Gastrocnemius medialis (tissue), 4 donors: ENCODE measurements at regions of chr1 and their contacts with region 1.

Region 1: GRCh38 chr1:235415008-235415904 is 48.0 kb downstream of the TBCE start:
- DNase-seq: peak; percentile 20 to 59
- ATAC-seq: peak; percentile 42 to 62
- H3K4me3 ChIP-seq: no peak overlapping the region
- H3K27ac ChIP-seq: peak overlapping the region in 1 of 4 donors; percentile 23
- H3K4me1 ChIP-seq: peaks cover 7 to 13% of the 10 kb centered on the region in 2 donors
- H3K27me3 ChIP-seq: no peaks in the 10 kb centered on the region
- CTCF ChIP-seq: peak; percentile 62 to 76 (median 72)
- POLR2A ChIP-seq: no peak

Region 2: DNA sequence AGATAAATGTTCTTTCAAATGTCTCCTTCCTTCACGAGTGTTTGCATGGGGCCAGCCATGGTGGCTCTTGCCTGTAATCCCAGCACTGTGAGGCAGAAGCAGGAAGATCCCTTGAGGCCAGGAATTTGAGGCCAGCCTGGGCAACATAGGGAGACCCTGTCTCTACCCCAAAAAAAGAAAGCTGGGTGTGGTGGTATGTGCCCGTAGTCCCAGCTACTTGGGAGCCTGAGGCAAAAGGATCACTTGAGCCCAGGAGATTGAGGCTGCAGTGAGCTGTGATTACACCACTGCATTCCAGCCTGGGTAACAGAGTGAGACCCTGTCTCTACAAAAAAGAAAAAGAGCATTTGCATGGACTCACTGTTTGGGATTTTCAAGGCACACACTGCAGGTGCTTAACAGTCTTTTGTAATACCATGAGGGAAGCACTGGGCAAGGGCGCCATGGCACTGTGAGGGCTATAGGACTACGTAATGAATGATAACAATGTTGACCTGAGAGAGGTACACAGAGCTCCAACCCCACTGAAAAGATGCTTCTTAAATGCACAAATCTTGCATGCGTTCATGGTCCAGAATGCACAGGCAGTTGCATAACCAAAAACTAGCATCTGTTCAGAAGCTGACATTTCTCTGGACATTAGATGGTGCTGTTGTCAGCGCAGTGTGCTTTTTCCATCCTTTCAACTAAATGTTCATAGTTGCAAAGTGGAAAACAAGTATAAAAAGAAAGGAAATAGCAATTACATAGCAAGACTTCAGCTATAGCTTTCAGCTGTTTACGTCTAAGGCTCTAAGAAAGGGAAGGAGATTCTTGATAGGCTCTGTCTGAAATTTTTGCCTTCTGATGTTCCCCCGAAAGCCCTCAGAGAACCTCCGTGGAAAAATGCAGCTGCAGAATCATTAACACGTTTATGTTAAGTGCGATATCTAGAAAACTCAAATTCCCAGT is 928.5 kb before region 1 on chr1:
- in situ Hi-C with region 1: no loop called
- intact Hi-C with region 1: loop called (anchors 10 kb)
- DNase-seq: peak in 1 of 2 donors; percentile 45
- ATAC-seq: peak; percentile 81 to 91
- H3K4me3 ChIP-seq: no peak overlapping the region
- H3K27ac ChIP-seq: peak overlapping the region in 1 of 4 donors; percentile 6
- H3K4me1 ChIP-seq: peaks cover 3% of the 10 kb centered on the region in 2 donors
- H3K27me3 ChIP-seq: no peaks in the 10 kb centered on the region
- CTCF ChIP-seq: peak in 4 of 5 experiments; percentile 53 to 79 (median 66)
- POLR2A ChIP-seq: no peak

Region 3: DNA sequence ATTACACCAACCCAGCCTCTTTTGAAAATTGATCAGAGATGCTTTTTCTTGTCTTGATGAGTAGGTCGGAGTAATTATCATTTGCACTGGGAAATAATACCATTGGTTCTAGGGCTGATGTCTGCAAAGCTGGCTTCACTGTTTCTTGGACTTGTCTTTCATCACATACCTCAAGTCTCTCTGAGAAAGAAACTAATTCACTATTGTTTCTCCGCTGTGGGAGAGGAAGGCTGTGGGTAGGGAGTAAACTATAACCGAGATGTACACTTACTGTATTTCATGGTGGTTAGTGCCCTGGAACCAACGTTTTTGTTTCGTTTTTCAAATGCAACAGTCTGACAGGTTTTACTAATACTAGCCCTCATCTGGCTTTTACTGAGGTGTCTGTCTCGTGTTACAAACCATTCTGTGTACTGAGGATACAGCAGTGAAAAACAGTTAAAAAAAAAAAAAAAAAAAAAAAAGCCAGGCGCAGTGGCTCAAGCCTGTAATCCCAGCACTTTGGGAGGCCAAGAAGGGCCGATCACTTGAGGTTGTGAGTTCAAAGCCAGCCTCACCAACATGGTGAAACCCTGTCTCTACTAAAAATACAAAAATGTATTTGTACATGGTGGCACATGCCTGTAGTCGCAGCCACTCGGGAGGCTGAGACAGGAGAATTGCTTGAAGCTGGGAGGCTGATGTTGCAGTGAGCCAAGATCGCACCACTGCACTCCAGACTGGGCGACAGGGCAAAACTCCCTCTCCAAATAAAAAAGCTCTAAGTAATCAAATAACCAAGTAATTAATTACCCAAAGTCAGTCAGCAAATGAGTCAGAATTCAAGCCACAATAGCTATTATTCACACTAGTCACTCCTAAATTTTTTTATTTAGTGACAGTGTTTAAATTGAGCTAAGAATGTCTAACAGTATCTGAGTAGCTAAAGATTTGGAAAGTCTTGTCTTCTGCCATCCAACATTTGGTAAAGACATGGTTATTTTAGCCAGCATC is 309.9 kb before region 1 on chr1:
- in situ Hi-C with region 1: loop called in 2 of 4 experiments (anchors 10 to 25 kb)
- intact Hi-C with region 1: loop called (anchors 5 kb)
- DNase-seq: no peak
- ATAC-seq: no peak
- H3K4me3 ChIP-seq: no peak overlapping the region
- H3K27ac ChIP-seq: no peak overlapping the region
- H3K4me1 ChIP-seq: peaks cover 9 to 14% of the 10 kb centered on the region in 2 donors
- H3K27me3 ChIP-seq: no peaks in the 10 kb centered on the region
- CTCF ChIP-seq: no peak
- POLR2A ChIP-seq: no peak

Region 4: DNA sequence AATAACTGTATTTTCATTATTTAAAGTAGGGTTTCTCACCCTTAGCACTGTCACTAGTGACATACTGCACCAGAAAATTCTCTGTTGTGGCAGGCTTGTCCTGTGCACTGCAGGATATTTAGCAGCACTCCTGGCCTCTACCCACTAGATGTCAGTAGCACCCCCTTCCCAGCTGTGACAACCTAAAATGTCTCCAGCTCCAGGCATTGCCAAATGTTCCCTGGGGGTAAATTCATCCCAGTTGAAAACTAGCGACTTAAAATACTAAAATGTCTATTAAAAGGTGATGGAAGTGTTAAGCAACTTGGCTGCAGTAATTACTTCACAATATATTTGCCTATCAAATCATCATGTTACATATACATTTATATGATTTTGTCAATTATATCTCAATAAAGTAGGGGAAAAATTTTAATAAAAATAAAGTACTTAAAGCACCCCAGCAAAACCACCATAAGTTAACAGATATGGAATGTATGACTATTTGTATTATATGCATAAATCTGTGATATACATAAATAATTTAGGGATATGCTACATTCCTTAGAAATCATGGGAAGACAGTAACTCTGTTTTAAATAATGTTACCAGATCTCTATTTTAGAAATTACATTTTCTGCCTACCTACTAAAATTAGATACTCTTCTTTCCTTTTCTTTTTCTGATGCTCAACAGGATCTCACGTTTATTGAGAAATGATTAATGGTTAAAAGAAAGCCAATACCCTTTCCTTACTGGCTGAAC is 161.9 kb before region 1 on chr1:
- in situ Hi-C with region 1: loop called in 3 of 4 experiments (anchors 5 kb)
- intact Hi-C with region 1: loop called (anchors 1 kb)
- DNase-seq: peak; percentile 28 to 66
- ATAC-seq: peak; percentile 95 to 99
- H3K4me3 ChIP-seq: no peak overlapping the region
- H3K27ac ChIP-seq: no peak overlapping the region
- H3K4me1 ChIP-seq: peaks cover 0 to 12% of the 10 kb centered on the region in 2 donors
- H3K27me3 ChIP-seq: no peaks in the 10 kb centered on the region
- CTCF ChIP-seq: peak; percentile 47 to 88 (median 81)
- POLR2A ChIP-seq: no peak

Region 5: DNA sequence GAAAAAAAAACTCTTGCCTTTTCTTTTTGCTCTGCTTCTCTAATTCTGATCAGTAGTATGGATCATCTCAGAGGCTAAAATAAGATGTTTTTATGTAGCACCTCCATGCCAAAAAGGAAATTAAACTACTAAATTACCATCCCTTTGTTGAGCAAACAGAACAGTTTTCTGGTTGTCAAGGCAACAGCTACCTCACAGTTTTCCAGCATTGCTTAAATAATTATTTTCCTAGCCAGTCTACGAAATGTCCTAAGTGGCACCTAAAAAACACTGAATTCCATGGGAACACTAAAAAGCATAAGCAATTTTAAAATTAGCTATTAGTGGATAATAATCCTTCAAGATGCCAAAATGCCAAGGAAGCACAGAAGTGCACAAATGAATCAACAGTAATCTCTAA is 148.9 kb before region 1 on chr1:
- in situ Hi-C with region 1: loop called in 1 of 4 experiments (anchors 10 kb)
- intact Hi-C with region 1: no loop called
- DNase-seq: no peak
- ATAC-seq: no peak
- H3K4me3 ChIP-seq: no peak overlapping the region
- H3K27ac ChIP-seq: no peak overlapping the region
- H3K4me1 ChIP-seq: peaks cover 13 to 26% of the 10 kb centered on the region in 2 donors
- H3K27me3 ChIP-seq: no peaks in the 10 kb centered on the region
- CTCF ChIP-seq: no peak
- POLR2A ChIP-seq: no peak

Region 6: DNA sequence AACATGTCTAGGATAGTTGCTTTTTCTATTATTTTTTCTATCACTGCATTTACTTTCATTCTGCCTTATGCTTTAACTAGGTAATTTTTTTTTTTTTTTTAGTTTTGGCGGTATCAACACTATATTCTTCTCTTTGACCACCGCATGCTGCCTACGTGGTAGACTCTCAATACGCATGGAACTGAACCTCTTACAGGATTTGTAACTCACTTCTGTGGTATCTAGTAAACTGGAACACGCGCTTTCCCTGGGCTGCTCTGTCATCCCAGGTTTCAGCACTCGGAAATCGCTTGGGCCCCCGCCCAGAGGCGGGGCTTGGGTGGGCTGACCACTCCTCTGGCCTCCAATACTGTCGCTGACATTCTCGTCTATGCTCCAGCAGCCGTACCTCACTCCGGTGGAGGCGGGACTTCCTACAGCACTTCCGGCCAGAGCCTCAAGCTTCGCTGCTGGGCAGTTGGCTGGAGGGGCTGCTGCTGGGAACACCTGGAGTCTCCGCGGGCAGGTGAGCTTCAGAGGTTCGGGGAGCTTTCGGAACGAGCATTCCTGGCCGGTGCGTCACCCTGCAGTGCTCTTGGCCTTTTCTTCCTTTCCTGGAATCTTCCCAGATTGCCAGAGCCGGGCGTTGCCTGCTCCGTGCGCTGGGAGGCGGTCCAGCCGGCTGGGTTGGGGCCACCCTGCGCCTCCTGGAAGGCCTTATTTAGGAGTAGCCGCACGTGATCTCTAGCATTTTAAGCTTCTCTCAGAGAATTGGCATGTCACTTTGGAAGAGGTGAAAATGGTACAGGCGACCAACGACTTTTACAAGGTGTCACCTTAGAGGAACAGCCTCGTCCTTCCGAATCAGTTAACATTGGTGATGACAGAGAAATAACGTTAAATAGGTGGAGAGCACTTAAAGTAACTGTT is 48.0 kb before region 1 on chr1 and contains the start of gene TBCE:
- in situ Hi-C with region 1: no loop called
- intact Hi-C with region 1: loop called (anchors 2 kb)
- DNase-seq: peak; percentile 96 to 98
- ATAC-seq: peak; percentile 99 to 100
- H3K4me3 ChIP-seq: peak within 1 kb of the TSS; percentile 63 to 83 (median 76)
- H3K27ac ChIP-seq: peak within 1 kb of the TSS; percentile 85 to 93 (median 88)
- H3K4me1 ChIP-seq: peaks cover 2 to 4% of the 10 kb centered on the region in 2 donors
- H3K27me3 ChIP-seq: no peaks in the 10 kb centered on the region
- CTCF ChIP-seq: peak in 2 of 5 experiments; percentile 17 to 19
- POLR2A ChIP-seq: peak; percentile 86 to 94
- total RNA-seq, gene TBCE: 24.4 to 47.6 (median 29.2) TPM